ENCODE measurements at regions of chr11 and their contacts with region 1.

Region 1: DNA sequence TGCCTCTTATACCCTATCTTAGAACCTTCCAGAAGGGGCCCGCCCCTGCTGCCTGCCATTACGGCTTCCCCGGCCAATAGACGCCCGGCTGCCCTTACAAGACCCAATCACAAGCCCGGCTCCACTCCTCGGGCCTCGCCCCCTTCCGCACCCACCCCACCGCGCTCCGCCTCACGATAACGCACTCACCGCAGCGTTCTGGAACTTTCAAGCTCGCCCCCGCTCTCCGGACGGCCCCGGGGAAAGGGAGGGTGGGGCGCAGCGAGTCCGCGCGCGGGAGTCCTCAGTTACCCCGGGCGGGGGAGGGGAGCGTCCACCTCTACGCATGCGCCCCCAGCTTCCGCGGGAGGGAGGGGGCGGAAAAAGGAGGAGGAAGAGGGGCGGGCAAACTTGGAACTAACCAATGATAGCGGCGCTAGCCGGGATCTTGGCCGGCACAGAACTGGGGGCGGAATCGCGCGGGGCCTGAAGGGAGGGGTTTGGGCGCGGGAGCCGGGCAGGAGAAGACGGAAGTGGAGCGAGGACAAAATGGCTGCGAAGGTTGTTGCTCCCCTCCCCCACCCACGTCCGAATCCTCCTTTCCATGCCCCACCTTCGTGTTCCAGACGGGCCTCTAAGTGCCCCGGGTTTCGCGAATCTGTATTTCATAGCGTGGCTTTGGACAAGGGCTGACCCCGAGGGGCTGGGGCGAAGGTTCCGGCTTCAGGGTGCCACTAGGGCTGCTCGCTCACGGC is 389 bp upstream of the HSPA8 start:
- DNase-seq: peak; percentile 100
- H3K4me3 Mint-ChIP-seq: peak overlapping the region; percentile 97
- H3K27ac Mint-ChIP-seq: peak overlapping the region; percentile 99
- H3K4me1 Mint-ChIP-seq: peaks cover 40% of the 10 kb centered on the region
- H3K27me3 Mint-ChIP-seq: no peaks in the 10 kb centered on the region

Region 2: GRCh38 chr11:122673701-122674100 is 388.6 kb before region 1 on chr11:
- CTCF ChIA-PET with region 1: no interaction called
- intact Hi-C with region 1: loop called (anchors 5 kb)
- DNase-seq: no peak
- H3K4me3 Mint-ChIP-seq: no peak overlapping the region
- H3K27ac Mint-ChIP-seq: no peak overlapping the region
- H3K4me1 Mint-ChIP-seq: peaks cover 68% of the 10 kb centered on the region
- H3K27me3 Mint-ChIP-seq: no peaks in the 10 kb centered on the region

Region 3: GRCh38 chr11:122981388-122982264 is 80.7 kb before region 1 on chr11 and contains the start of gene BSX:
- CTCF ChIA-PET with region 1: no interaction called
- intact Hi-C with region 1: loop called (anchors 2 kb)
- DNase-seq: peak; percentile 70
- H3K4me3 Mint-ChIP-seq: no peak within 1 kb of the TSS
- H3K27ac Mint-ChIP-seq: no peak within 1 kb of the TSS
- H3K4me1 Mint-ChIP-seq: peaks cover 35% of the 10 kb centered on the region
- H3K27me3 Mint-ChIP-seq: peaks cover 85% of the 10 kb centered on the region
- total RNA-seq, gene BSX: not detected

Region 4: GRCh38 chr11:123110356-123110755 is 48.0 kb after region 1 on chr11:
- CTCF ChIA-PET with region 1: interaction called, 4 read pairs
- intact Hi-C with region 1: loop called (anchors 2 kb)
- DNase-seq: no peak
- H3K4me3 Mint-ChIP-seq: peak overlapping the region; percentile 23
- H3K27ac Mint-ChIP-seq: no peak overlapping the region
- H3K4me1 Mint-ChIP-seq: peaks cover 4% of the 10 kb centered on the region
- H3K27me3 Mint-ChIP-seq: no peaks in the 10 kb centered on the region

Region 5: GRCh38 chr11:123357961-123358841 is 295.9 kb after region 1 on chr11:
- CTCF ChIA-PET with region 1: no interaction called
- intact Hi-C with region 1: loop called (anchors 2 kb)
- DNase-seq: peak; percentile 71
- H3K4me3 Mint-ChIP-seq: peak overlapping the region; percentile 87
- H3K27ac Mint-ChIP-seq: peak overlapping the region; percentile 77
- H3K4me1 Mint-ChIP-seq: peaks cover 42% of the 10 kb centered on the region
- H3K27me3 Mint-ChIP-seq: peaks cover 40% of the 10 kb centered on the region

Region 6: GRCh38 chr11:123454060-123454651 is 391.8 kb after region 1 on chr11:
- CTCF ChIA-PET with region 1: no interaction called
- intact Hi-C with region 1: loop called (anchors 1 kb)
- DNase-seq: peak; percentile 93
- H3K4me3 Mint-ChIP-seq: peak overlapping the region; percentile 72
- H3K27ac Mint-ChIP-seq: peak overlapping the region; percentile 93
- H3K4me1 Mint-ChIP-seq: peaks cover 73% of the 10 kb centered on the region
- H3K27me3 Mint-ChIP-seq: no peaks in the 10 kb centered on the region